Activated CD4-positive, alpha-beta memory T cell treated with anti-CD3 and anti-CD28 coated beads for 36 hours (primary cell): ENCODE measurements at regions of chr21 and their contacts with region 1.

Region 1: GRCh38 chr21:42449296-42449927 is 45.7 kb downstream of the UBASH3A start:
- DNase-seq: no peak
- H3K4me3 Mint-ChIP-seq: no peak overlapping the region
- H3K27ac Mint-ChIP-seq: no peak overlapping the region
- H3K4me1 Mint-ChIP-seq: peaks cover 27% of the 10 kb centered on the region
- H3K27me3 Mint-ChIP-seq: no peaks in the 10 kb centered on the region

Region 2: DNA sequence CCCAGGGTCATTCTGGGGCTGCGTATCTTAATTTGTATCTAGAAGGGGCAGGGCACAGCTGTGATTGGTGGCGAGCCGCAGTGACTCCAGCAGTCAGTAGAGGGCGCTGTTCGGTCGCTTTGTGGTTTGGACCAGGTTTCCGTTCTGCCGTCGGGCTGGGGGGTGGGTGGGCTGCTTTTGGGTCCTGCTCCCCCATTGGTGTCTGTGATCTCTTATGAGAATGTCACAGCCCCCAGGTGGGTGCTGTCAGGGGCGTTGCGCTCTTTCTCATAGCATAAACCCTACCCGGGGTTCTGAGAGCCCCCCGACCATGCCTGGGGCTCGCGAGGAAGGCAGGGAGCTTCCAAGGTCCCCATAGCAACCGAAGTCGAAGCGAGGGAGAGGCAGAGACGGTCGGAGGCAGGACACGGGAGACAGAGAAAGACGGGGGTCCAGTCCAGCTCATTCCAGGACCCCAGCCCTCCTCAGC is 139.6 kb before region 1 on chr21:
- CTCF ChIA-PET with region 1: interaction called, 34 read pairs
- POLR2A ChIA-PET with region 1: no interaction called
- intact Hi-C with region 1: loop called (anchors 1 kb)
- DNase-seq: peak; percentile 83
- H3K4me3 Mint-ChIP-seq: no peak overlapping the region
- H3K27ac Mint-ChIP-seq: no peak overlapping the region
- H3K4me1 Mint-ChIP-seq: peaks cover 3% of the 10 kb centered on the region
- H3K27me3 Mint-ChIP-seq: peaks cover 5% of the 10 kb centered on the region

Region 3: DNA sequence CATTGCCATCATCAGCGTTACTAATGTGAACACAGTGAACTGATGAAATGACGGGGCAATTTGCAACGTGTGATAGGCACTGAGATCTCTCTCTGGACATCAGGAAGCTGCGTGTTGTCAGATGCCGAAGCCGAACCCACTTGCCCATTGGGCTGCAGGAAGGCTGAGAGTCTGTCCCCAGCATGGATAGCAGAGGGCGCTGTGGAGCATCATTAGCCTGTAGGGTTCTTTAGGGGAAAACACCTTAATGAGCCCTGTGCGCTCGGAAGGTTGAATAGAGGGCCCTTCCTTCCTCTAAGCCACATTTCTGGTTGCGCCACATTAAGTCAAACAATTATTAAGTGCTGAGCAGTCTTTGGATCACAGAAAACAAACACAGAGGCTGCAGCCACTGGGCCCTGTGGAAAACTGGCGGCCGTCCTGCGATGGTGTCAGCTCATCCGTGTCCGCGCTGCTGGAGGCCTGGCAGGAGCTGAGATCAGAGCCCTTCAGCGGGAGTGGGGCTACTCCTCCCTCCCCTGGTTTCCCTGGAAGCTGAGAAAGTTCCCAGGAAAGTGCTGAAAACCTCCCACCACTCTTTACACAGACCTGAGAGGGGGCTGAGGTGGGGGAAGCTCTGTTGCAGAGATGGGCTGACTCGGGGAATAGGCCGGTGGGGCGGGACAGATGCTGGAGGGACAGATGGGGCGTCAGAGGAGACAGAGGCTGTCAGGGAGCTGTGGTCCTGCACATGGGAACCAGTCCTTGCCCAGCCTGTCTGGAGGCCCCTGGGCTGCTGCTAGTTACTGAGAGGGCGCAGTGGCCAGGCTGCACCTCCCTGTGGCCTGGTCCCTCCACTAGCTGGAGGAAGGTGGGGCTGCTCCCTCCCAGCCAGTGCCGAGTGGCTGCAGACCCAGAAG is 111.3 kb before region 1 on chr21:
- CTCF ChIA-PET with region 1: interaction called, 32 read pairs
- POLR2A ChIA-PET with region 1: no interaction called
- intact Hi-C with region 1: loop called (anchors 1 kb)
- DNase-seq: peak; percentile 87
- H3K4me3 Mint-ChIP-seq: no peak overlapping the region
- H3K27ac Mint-ChIP-seq: no peak overlapping the region
- H3K4me1 Mint-ChIP-seq: peaks cover 23% of the 10 kb centered on the region
- H3K27me3 Mint-ChIP-seq: peaks cover 11% of the 10 kb centered on the region

Region 4: GRCh38 chr21:42360317-42360716 is 89.1 kb before region 1 on chr21:
- CTCF ChIA-PET with region 1: interaction called, 20 read pairs
- POLR2A ChIA-PET with region 1: no interaction called
- intact Hi-C with region 1: no loop called
- DNase-seq: peak; percentile 41
- H3K4me3 Mint-ChIP-seq: no peak overlapping the region
- H3K27ac Mint-ChIP-seq: no peak overlapping the region
- H3K4me1 Mint-ChIP-seq: no peaks in the 10 kb centered on the region
- H3K27me3 Mint-ChIP-seq: peaks cover 8% of the 10 kb centered on the region